Dendritic cell treated with granulocyte-macrophage colony-stimulating factor and Interleukin-4, amounts not matched to agents 40 ng/mL and 50 ng/mL, for 4 days (primary cell): ENCODE measurements at regions of chr1 and their contacts with region 1.

Region 1: GRCh38 chr1:176897350-176898236 is 266.9 kb downstream of the ASTN1 start:
- H3K4me3 Mint-ChIP-seq: no peak overlapping the region
- H3K27ac Mint-ChIP-seq: no peak overlapping the region
- H3K4me1 Mint-ChIP-seq: peaks cover 8% of the 10 kb centered on the region
- H3K27me3 Mint-ChIP-seq: peaks cover 2% of the 10 kb centered on the region

Region 2: DNA sequence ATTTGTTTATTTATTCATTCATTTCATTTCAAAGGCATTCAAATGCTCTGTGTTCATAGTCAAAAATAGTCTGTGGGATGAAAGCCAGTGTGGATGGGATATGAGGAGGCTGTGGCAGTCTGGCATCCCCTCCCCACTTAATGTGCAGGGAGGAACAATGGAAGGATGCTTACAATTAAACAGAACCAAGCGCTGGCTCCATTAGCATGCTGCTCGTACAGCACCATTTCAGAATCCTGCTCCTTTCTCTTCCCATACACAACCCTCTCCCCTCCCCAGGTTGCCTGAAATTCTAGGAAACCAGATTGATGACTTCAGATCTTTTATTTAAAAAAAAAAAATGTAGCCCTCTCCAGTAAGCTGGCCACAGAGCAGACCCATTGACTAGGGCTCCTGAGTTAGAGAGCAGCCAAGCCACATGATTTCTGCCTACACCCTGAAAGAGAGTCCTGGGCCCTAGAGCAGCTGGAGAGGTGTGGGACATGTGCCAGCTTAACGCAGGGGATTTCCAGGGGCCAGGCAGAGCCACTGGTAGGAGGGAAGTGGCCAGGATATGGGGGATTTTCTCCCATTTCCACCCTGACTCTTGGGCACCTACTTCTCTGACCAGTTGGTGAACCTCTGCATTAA is 61.7 kb after region 1 on chr1:
- intact Hi-C with region 1: no loop called
- H3K4me3 Mint-ChIP-seq: no peak overlapping the region
- H3K27ac Mint-ChIP-seq: no peak overlapping the region
- H3K4me1 Mint-ChIP-seq: no peaks in the 10 kb centered on the region
- H3K27me3 Mint-ChIP-seq: no peaks in the 10 kb centered on the region

Region 3: DNA sequence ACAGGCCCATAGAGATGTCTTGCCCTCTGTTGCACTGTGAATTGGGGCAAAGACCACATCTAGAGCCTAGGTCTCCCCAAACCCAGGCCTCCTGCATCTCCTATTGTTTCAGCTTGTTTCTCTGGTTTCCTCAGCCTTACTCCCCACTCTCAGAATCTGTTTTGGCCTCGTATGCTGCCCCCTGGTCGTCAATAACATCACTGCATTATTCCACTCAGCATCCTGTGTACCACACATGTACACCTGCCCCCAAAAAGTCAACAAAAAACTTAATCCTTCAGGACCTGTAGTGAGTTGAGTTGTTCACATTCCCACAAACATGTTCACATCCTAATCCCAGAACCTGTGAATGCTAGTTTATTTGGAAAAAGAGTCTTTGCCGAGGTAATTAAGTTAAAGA is 458.0 kb after region 1 on chr1:
- intact Hi-C with region 1: no loop called
- H3K4me3 Mint-ChIP-seq: no peak overlapping the region
- H3K27ac Mint-ChIP-seq: no peak overlapping the region
- H3K4me1 Mint-ChIP-seq: no peaks in the 10 kb centered on the region
- H3K27me3 Mint-ChIP-seq: no peaks in the 10 kb centered on the region

Region 4: DNA sequence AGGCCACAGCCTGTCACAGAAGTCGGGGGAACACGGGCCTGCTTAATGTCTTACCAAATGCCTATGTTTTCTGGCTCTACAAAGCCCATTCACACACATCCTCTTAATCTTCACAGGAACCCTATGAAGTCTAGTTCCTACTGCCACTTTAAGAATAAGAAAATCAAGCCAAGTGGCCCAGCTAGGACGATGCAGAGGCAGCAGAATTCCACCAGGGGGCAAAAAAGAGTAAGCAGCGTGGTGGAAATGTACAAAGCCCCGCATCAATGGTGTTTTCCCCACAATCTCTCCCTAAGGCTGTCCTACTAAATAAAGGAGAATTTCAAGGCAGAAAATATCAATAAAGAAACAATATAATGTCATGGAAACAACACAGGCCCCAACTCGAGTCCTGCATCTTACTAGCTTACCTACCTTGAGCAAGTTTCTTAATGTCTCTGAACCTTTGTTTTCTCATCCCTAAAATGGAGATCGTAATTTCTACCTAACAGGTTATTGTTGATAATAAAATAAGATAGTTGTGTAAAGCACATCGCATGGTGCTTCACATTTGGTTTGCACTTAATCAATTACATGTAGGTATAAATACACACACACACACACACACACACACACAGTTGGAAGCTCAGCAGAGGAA is 1050.9 kb after region 1 on chr1:
- intact Hi-C with region 1: loop called (anchors 5 kb)
- H3K4me3 Mint-ChIP-seq: no peak overlapping the region
- H3K27ac Mint-ChIP-seq: no peak overlapping the region
- H3K4me1 Mint-ChIP-seq: peaks cover 25% of the 10 kb centered on the region
- H3K27me3 Mint-ChIP-seq: no peaks in the 10 kb centered on the region